ENCODE measurements at regions of chr1 and their contacts with region 1.

Region 1: GRCh38 chr1:52153898-52154297 is 12.0 kb downstream of the ZFYVE9 start:
- DNase-seq: no peak
- ATAC-seq: no peak
- H3K4me3 ChIP-seq: no peak overlapping the region
- H3K27ac ChIP-seq: no peak overlapping the region
- H3K4me1 ChIP-seq: peaks cover 4 to 8% of the 10 kb centered on the region in 2 experiments; a peak in 4 of 5 replicates
- H3K27me3 ChIP-seq: no peaks in the 10 kb centered on the region
- CTCF ChIP-seq: no peak
- EP300 ChIP-seq: no peak
- POLR2A ChIP-seq: no peak
- RAD21 ChIP-seq: no peak

Region 2: GRCh38 chr1:52164604-52165003 is 10.7 kb after region 1 on chr1:
- CTCF ChIA-PET with region 1: no interaction called
- POLR2A ChIA-PET with region 1: interaction called, 10 read pairs
- in situ Hi-C with region 1: no loop called
- intact Hi-C with region 1: no loop called
- DNase-seq: no peak
- ATAC-seq: no peak
- H3K4me3 ChIP-seq: no peak overlapping the region
- H3K27ac ChIP-seq: no peak overlapping the region
- H3K4me1 ChIP-seq: no peaks in the 10 kb centered on the region
- H3K27me3 ChIP-seq: no peaks in the 10 kb centered on the region
- CTCF ChIP-seq: no peak
- EP300 ChIP-seq: no peak
- POLR2A ChIP-seq: no peak
- RAD21 ChIP-seq: no peak

Region 3: GRCh38 chr1:52553362-52554266 is 399.7 kb after region 1 on chr1:
- CTCF ChIA-PET with region 1: no interaction called
- POLR2A ChIA-PET with region 1: no interaction called
- in situ Hi-C with region 1: no loop called
- intact Hi-C with region 1: no loop called
- DNase-seq: peak; percentile 89 to 94 (median 92)
- ATAC-seq: peak; percentile 86
- H3K4me3 ChIP-seq: peak overlapping the region; percentile 77
- H3K27ac ChIP-seq: peak overlapping the region; percentile 87; the same call in 2 of the 3 replicates
- H3K4me1 ChIP-seq: peaks cover 9 to 19% of the 10 kb centered on the region in 2 experiments; a peak in 3 of 5 replicates
- H3K27me3 ChIP-seq: no peaks in the 10 kb centered on the region
- CTCF ChIP-seq: no peak
- EP300 ChIP-seq: 0 out of 2 replicates have a peak, but pooled peaks have one; percentile 22
- POLR2A ChIP-seq: peak; percentile 3; the same call in 1 of the 2 replicates
- RAD21 ChIP-seq: 0 out of 4 replicates have a peak, but pooled peaks of 1 of the 2 experiments have one; percentile 14

Measured in K562 (cell line).